Sigmoid colon (tissue), 7 donors: ENCODE measurements at regions of chr12 and their contacts with region 1.

Region 1: DNA sequence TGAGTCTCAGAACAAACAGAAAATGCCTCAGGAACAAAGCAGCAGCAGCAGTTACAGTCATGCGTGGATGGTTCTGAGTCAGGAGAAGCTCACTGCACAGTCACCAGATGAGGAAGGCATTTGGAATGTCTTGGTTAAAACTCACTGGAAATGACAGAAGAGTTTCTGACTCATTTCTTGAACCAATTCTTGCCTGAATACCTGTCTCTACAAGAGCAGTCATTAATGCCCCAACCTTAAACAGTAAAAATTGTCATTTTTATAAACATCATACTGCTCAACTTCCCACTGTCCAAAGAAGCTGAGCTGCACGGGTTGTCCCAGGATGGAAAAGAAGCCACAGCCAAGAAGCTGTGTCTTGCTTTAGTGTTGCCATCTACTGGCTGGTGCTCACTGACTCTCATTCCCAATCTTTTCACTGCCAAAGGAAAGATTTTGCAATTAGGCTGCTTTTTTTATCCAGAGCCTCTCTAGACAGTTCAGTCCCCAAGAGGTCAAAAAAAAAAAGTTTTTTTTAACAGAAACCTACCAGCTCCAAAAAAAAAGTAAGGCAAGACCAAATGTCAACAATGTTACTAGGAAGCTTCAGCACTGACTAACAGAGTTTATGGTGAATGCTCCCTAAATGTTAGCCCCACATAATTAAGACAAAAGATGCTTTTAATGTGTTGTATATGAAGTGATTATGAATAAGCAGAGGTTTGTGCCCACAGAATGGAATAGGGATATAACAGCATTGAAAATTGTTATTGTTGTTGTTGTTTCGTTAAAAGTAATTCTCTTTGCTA is 40.4 kb downstream of the KICS2 start:
- DNase-seq: peak; percentile 79
- H3K4me3 ChIP-seq: no peak overlapping the region
- H3K27ac ChIP-seq: peak overlapping the region; percentile 6 to 77 (median 68)
- H3K4me1 ChIP-seq: peaks cover 0 to 16% (median 7%) of the 10 kb centered on the region in 4 donors
- H3K27me3 ChIP-seq: no peaks in the 10 kb centered on the region
- CTCF ChIP-seq: peak; percentile 41 to 67 (median 62)
- EP300 ChIP-seq: no peak
- POLR2A ChIP-seq: no peak

Region 2: DNA sequence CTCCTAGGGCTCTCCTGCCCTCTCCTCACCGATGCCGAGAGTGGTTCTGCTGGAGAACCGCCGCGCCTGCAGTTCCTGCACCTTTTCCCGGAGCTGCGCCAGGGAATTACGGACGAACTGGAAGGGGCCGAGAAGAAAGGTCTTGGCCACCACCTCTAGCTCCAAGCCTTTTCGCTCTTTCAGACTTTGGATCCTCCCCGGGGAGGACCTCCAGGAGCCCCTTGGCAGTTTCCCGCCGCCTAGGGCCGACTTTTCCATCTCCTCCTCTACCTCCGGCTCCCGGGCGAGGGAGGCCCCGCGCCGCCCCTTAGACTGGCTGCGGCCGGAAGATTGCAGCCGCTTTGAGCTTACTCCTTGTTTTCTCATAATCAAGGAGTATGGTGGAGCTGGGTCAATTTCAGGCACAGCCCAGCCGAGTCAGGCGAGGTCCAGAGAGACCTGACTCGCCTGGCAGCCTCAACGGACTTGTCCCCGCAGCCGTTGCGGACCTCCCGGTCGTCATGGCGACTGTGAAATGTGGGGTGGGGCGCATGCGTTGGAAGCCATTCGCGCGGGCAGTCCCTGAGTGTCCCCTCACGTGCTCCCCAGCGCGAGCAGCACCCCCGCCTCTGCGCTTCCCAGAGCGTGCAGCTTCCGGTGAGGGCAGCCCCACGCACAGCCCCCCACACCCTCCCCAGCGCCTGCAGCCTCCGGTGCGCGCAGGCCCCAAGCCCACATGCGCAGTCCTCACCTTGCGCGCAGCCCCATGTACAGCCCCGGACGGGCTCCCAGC is 513.5 kb before region 1 on chr12 and contains the start of gene DPY19L2:
- intact Hi-C with region 1: loop called (anchors 5 kb)
- DNase-seq: peak; percentile 88
- H3K4me3 ChIP-seq: peak within 1 kb of the TSS; percentile 42 to 71 (median 58)
- H3K27ac ChIP-seq: peak within 1 kb of the TSS; percentile 78 to 87 (median 82)
- H3K4me1 ChIP-seq: peaks cover 0 to 7% (median 2%) of the 10 kb centered on the region in 4 donors
- H3K27me3 ChIP-seq: no peaks in the 10 kb centered on the region
- CTCF ChIP-seq: no peak
- EP300 ChIP-seq: no peak
- POLR2A ChIP-seq: no peak
- total RNA-seq, gene DPY19L2: 11.1 to 28.8 (median 20.1) TPM

Region 3: GRCh38 chr12:63989301-63989845 is 192.3 kb before region 1 on chr12:
- intact Hi-C with region 1: loop called (anchors 10 kb)
- DNase-seq: no peak
- H3K4me3 ChIP-seq: no peak overlapping the region
- H3K27ac ChIP-seq: peak overlapping the region; percentile 26 to 59 (median 30)
- H3K4me1 ChIP-seq: peaks cover 0 to 35% (median 31%) of the 10 kb centered on the region in 4 donors
- H3K27me3 ChIP-seq: no peaks in the 10 kb centered on the region
- CTCF ChIP-seq: no peak
- EP300 ChIP-seq: no peak
- POLR2A ChIP-seq: no peak

Region 4: DNA sequence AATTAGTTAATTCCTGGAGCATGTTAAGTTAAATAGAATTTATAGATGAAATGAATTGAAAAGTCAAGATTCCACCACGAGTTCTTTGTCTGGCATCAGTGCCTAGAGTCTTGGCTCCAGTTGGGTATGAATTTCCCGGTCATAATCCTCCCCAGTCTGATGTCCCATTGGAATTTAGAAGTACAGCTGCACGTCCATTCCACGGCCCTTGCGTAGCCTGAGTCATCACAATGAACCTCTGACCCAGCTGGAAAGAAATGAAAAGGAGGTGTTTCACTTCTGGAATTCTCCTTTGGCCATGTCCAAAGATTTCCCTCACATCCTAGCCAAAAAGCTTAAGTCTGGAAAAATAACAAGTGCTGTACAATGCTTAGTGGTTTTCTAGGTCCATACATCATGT is 82.3 kb before region 1 on chr12:
- intact Hi-C with region 1: loop called (anchors 2 kb)
- DNase-seq: peak; percentile 83
- H3K4me3 ChIP-seq: no peak overlapping the region
- H3K27ac ChIP-seq: peak overlapping the region; percentile 56 to 83 (median 78)
- H3K4me1 ChIP-seq: peaks cover 0 to 32% (median 26%) of the 10 kb centered on the region in 4 donors
- H3K27me3 ChIP-seq: no peaks in the 10 kb centered on the region
- CTCF ChIP-seq: no peak
- EP300 ChIP-seq: peak in 2 of 4 donors; percentile 58 to 71
- POLR2A ChIP-seq: no peak

Region 5: GRCh38 chr12:64256166-64256800 is 74.6 kb after region 1 on chr12:
- intact Hi-C with region 1: loop called (anchors 5 kb)
- DNase-seq: no peak
- H3K4me3 ChIP-seq: no peak overlapping the region
- H3K27ac ChIP-seq: no peak overlapping the region
- H3K4me1 ChIP-seq: no peaks in the 10 kb centered on the region
- H3K27me3 ChIP-seq: no peaks in the 10 kb centered on the region
- CTCF ChIP-seq: peak in 3 of 4 experiments; percentile 44 to 61 (median 46)
- EP300 ChIP-seq: no peak
- POLR2A ChIP-seq: no peak